ENCODE measurements at regions of chr2 and their contacts with region 1.

Region 1: GRCh38 chr2:181146171-181146570 is 165.8 kb downstream of the UBE2E3 start:
- DNase-seq: no peak
- ATAC-seq: no peak
- H3K4me3 ChIP-seq: no peak overlapping the region
- H3K27ac ChIP-seq: no peak overlapping the region
- H3K4me1 ChIP-seq: no peaks in the 10 kb centered on the region
- H3K27me3 ChIP-seq: no peaks in the 10 kb centered on the region
- CTCF ChIP-seq: no peak
- EP300 ChIP-seq: no peak
- POLR2A ChIP-seq: no peak
- RAD21 ChIP-seq: no peak

Region 2: DNA sequence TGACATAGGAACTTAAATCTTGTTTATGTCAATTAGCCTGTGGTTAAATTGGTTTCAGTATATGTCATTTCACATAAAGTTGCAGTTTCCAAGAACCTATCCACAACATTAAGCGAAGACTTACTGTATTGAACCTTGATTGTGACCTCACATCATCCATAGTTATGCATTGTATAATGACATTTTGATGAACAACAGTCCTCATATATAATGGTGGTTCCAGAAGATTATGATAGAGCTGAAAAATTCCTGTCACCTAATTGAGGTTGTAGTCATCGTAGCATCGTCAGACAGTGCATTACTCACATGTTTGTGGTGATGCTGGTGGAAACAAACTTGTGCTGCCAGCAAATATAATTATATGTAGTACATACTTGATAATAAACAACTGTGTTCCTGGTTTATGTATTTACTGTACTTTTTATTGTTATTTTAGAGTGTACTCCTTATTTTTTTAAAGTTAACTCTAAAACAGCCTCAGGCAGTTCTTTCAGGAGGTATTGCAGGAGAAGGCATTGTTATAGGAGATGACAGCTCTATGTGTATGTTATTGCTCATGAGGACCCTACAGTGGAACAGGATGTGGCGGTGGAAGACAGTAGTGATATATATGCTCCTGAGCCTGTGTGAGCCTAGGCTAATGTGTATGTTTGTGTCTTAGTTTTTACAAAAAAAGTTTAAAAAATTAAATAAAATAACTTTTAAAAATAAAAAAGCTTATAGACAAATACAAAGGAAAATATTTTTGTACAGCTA is 109.1 kb before region 1 on chr2:
- CTCF ChIA-PET with region 1: no interaction called
- POLR2A ChIA-PET with region 1: no interaction called
- RAD21 ChIA-PET with region 1: no interaction called
- SMC1A ChIA-PET with region 1: no interaction called
- in situ Hi-C with region 1: no loop called
- intact Hi-C with region 1: no loop called
- DNase-seq: no peak
- ATAC-seq: peak; percentile 82
- H3K4me3 ChIP-seq: no peak overlapping the region
- H3K27ac ChIP-seq: no peak overlapping the region
- H3K4me1 ChIP-seq: peaks cover 3% of the 10 kb centered on the region
- H3K27me3 ChIP-seq: no peaks in the 10 kb centered on the region
- CTCF ChIP-seq: no peak
- EP300 ChIP-seq: no peak
- POLR2A ChIP-seq: no peak
- RAD21 ChIP-seq: no peak

Region 3: GRCh38 chr2:181130686-181131085 is 15.5 kb before region 1 on chr2:
- CTCF ChIA-PET with region 1: interaction called, 6 read pairs
- POLR2A ChIA-PET with region 1: interaction called, 4 read pairs
- RAD21 ChIA-PET with region 1: interaction called, 8 read pairs
- SMC1A ChIA-PET with region 1: interaction called, 11 read pairs
- in situ Hi-C with region 1: no loop called
- intact Hi-C with region 1: no loop called
- DNase-seq: no peak
- ATAC-seq: no peak
- H3K4me3 ChIP-seq: no peak overlapping the region
- H3K27ac ChIP-seq: no peak overlapping the region; the same call in 1 of the 2 replicates
- H3K4me1 ChIP-seq: peaks cover 4% of the 10 kb centered on the region
- H3K27me3 ChIP-seq: no peaks in the 10 kb centered on the region
- CTCF ChIP-seq: no peak
- EP300 ChIP-seq: no peak
- POLR2A ChIP-seq: no peak
- RAD21 ChIP-seq: no peak

Measured in GM12878 (cell line).